ENCODE measurements at regions of chr18 and their contacts with region 1.

Region 1: GRCh38 chr18:961644-962355 is 57.1 kb downstream of the ADCYAP1 start:
- DNase-seq: no peak
- H3K4me3 ChIP-seq: peak overlapping the region; percentile 52
- CTCF ChIP-seq: peak; percentile 70

Region 2: GRCh38 chr18:864872-865273 is 96.9 kb before region 1 on chr18:
- CTCF ChIA-PET with region 1: interaction called, 12 read pairs
- POLR2A ChIA-PET with region 1: no interaction called
- DNase-seq: peak; percentile 10
- H3K4me3 ChIP-seq: no peak overlapping the region
- CTCF ChIP-seq: peak; percentile 92

Region 3: DNA sequence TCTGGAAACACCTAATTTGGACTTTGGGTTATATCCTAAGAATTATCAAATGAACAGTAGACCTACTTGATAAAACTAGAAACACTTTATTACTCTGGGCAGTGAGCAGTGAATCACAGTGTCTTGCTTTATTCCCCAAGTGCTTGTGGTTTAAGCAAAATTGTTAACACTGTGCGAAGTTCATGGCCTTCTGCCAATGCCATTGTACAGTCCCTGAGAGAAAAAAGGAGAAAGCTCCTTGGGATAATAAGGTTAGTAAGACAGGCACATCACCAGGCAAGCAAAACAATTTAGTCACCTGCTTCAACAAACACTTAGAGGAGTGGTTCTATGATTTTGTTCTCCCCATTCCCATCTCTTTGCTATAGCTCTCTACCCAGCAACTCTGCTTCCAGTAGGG is 17.4 kb before region 1 on chr18:
- CTCF ChIA-PET with region 1: interaction called, 15 read pairs
- POLR2A ChIA-PET with region 1: no interaction called
- DNase-seq: no peak
- H3K4me3 ChIP-seq: no peak overlapping the region
- CTCF ChIP-seq: no peak

Region 4: DNA sequence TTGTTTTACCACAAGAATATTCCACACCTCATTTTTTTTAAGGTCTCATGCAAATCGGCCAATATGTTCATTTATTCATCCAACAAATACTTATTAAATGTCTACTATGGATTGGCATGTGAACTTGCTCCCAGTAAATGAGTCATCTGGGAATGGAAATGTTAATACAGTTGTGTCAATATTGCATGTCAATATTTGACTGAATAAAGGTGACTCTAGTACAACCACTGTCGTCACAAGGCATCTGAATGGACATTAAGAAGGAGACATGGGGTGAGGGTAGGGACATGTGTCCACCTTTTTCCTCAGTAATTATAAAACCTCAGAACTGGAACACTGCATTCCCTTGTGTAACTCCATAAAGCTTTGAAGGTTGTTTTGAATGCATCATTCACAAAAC is 308.3 kb after region 1 on chr18:
- CTCF ChIA-PET with region 1: no interaction called
- POLR2A ChIA-PET with region 1: no interaction called
- DNase-seq: no peak
- H3K4me3 ChIP-seq: no peak overlapping the region
- CTCF ChIP-seq: no peak